Left ventricle myocardium superior (tissue), 1 donor: ENCODE measurements at regions of chr2 and their contacts with region 1.

Region 1: GRCh38 chr2:62456721-62457539 is 49.1 kb downstream of the TMEM17 start:
- DNase-seq: peak; percentile 86
- ATAC-seq: peak; percentile 85

Region 2: DNA sequence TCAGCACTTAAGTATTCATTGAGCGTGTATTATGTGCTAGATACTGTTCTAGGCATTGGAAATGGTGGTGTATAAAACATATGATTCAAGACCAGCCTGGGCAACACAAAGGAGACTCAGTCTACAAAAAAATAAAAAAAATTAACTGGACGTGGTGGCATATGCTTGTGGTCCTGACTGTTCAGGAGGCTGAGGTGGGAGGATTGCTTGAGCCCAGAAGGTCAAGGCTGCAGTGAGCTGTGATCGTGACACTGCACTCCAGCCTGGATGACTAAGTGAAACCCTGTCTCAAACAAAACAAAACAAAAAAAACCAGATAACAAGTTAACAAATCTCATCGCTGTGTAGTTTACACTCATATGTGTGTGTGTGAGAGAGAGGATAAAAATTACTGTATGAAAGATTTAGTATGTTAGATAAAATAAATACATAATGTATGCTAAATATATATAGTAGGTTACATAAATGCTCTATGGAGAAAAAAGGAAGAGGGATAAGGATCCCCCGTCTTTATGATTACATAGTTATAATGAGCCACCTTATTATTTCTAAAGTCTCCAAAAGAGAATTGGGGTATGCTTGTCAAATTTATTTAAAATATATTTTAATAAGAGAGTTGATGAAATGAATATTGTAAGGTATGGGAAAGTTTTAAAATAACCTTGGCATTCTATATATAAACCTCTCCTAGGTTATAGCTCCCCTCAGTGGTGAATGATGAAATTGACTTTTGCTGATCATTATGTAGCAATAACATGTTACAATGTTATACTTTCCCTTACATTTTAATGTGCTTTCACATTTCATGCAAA is 317.8 kb after region 1 on chr2:
- intact Hi-C with region 1: loop called (anchors 2 kb)
- DNase-seq: no peak
- ATAC-seq: peak; percentile 75